H1 (cell line): ENCODE measurements at regions of chr1 and their contacts with region 1.

Region 1: GRCh38 chr1:43934101-43934985 is 742 bp downstream of the ARTN start:
- DNase-seq: peak; percentile 67 to 94
- H3K4me3 ChIP-seq: peak overlapping the region; percentile 57 to 67 (median 62)
- H3K27ac ChIP-seq: no peak overlapping the region
- H3K4me1 ChIP-seq: peaks cover 13 to 41% (median 35%) of the 10 kb centered on the region in 4 experiments
- H3K27me3 ChIP-seq: peaks cover 0 to 8% (median 4%) of the 10 kb centered on the region in 4 experiments; a peak in 5 of 7 replicates
- CTCF ChIP-seq: peak in 2 of 3 experiments; percentile 97 to 98; a peak in 3 of 4 replicates
- EP300 ChIP-seq: 0 out of 3 replicates have a peak, but pooled peaks of 1 of the 2 experiments have one; percentile 36
- POLR2A ChIP-seq: no peak
- RAD21 ChIP-seq: peak; percentile 92 to 97

Region 2: GRCh38 chr1:43783671-43784205 is 150.6 kb before region 1 on chr1:
- CTCF ChIA-PET with region 1: interaction called, 17 read pairs
- POLR2A ChIA-PET with region 1: interaction called, 3 read pairs
- DNase-seq: no peak
- H3K4me3 ChIP-seq: no peak overlapping the region
- H3K27ac ChIP-seq: no peak overlapping the region
- H3K4me1 ChIP-seq: peaks cover 0 to 4% (median 0%) of the 10 kb centered on the region in 4 experiments; a peak in 1 of 7 replicates
- H3K27me3 ChIP-seq: no peaks in the 10 kb centered on the region
- CTCF ChIP-seq: no peak
- EP300 ChIP-seq: no peak
- POLR2A ChIP-seq: no peak
- RAD21 ChIP-seq: no peak

Region 3: DNA sequence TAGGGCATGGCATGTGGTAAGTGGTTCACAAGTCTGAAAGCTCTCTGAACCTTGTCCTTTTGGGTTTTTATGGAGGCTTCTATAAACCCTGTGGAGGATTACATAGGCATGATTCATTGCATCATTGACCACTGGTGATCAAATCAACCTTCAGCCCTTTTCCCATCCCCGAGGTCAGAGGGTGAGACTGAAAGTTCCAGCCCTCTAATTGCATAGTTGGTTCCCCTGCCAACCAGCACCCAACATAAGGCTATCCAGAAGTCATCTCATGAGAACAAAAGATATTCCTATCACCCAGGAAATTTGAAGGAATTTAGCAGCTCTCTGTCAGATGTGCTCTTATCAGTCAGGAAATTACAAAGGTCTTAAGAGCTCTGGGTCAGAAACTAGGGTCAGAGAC is 90.2 kb before region 1 on chr1:
- CTCF ChIA-PET with region 1: interaction called, 23 read pairs
- POLR2A ChIA-PET with region 1: interaction called, 3 read pairs
- DNase-seq: no peak
- H3K4me3 ChIP-seq: no peak overlapping the region
- H3K27ac ChIP-seq: no peak overlapping the region
- H3K4me1 ChIP-seq: peaks cover 5 to 13% (median 7%) of the 10 kb centered on the region in 4 experiments
- H3K27me3 ChIP-seq: no peaks in the 10 kb centered on the region
- CTCF ChIP-seq: no peak
- EP300 ChIP-seq: no peak
- POLR2A ChIP-seq: no peak
- RAD21 ChIP-seq: no peak

Region 4: DNA sequence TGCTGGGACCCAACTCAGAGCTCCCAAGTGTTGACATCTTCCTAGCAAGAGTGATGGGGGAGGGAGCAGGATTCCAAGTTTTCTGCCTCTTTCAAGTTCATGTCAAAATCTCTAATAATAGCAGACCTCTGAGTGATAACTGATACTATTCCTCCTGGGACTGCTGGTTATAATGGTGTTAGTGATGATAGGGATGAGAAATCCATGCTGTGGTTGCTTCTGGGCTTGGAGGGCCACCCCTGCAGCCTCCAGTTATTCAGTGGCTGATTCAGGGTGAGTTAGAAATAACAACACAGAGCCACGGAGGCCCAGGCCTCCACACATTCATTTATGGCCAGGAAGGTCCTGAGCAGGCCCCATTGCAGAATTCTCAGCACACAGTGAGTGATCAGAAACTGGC is 41.3 kb before region 1 on chr1:
- CTCF ChIA-PET with region 1: interaction called, 11 read pairs
- POLR2A ChIA-PET with region 1: interaction called, 3 read pairs
- DNase-seq: no peak
- H3K4me3 ChIP-seq: no peak overlapping the region
- H3K27ac ChIP-seq: no peak overlapping the region
- H3K4me1 ChIP-seq: no peaks in the 10 kb centered on the region; a peak in 1 of 7 replicates
- H3K27me3 ChIP-seq: no peaks in the 10 kb centered on the region
- CTCF ChIP-seq: no peak
- EP300 ChIP-seq: no peak
- POLR2A ChIP-seq: no peak
- RAD21 ChIP-seq: no peak

Region 5: GRCh38 chr1:43968348-43968948 is 34.1 kb after region 1 on chr1:
- CTCF ChIA-PET with region 1: interaction called, 17 read pairs
- POLR2A ChIA-PET with region 1: no interaction called
- DNase-seq: peak in 1 of 2 experiments; percentile 80
- H3K4me3 ChIP-seq: no peak overlapping the region
- H3K27ac ChIP-seq: no peak overlapping the region
- H3K4me1 ChIP-seq: peaks cover 0 to 6% (median 4%) of the 10 kb centered on the region in 4 experiments; a peak in 5 of 7 replicates
- H3K27me3 ChIP-seq: no peaks in the 10 kb centered on the region
- CTCF ChIP-seq: no peak
- EP300 ChIP-seq: no peak
- POLR2A ChIP-seq: no peak
- RAD21 ChIP-seq: no peak; a peak in 1 of 4 replicates

Region 6: DNA sequence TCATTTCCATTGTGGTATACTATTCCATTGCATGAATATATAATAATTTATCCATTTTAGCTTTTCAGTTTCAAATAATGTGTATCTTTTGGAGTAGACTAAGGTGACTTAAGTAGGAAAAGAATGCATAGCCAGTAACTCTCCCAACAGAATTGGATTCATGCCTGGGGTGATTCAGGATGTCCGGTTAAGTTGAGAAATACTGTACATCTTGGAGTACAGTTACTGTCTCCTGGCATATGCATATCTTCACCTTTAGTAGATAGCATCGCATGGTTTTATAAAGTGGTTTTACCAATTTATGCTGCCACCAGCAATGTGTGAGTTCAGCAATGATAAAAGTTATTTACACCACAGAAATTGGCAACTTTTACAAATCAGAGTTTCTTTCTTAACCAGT is 115.5 kb after region 1 on chr1:
- CTCF ChIA-PET with region 1: interaction called, 29 read pairs
- POLR2A ChIA-PET with region 1: no interaction called
- DNase-seq: no peak
- H3K4me3 ChIP-seq: no peak overlapping the region
- H3K27ac ChIP-seq: no peak overlapping the region
- H3K4me1 ChIP-seq: peaks cover 0 to 3% (median under 1%) of the 10 kb centered on the region in 4 experiments; a peak in 1 of 7 replicates
- H3K27me3 ChIP-seq: peaks cover 0 to 5% (median 0%) of the 10 kb centered on the region in 4 experiments; a peak in 3 of 7 replicates
- CTCF ChIP-seq: no peak
- EP300 ChIP-seq: no peak
- POLR2A ChIP-seq: no peak
- RAD21 ChIP-seq: no peak